ENCODE measurements at regions of chr20 and their contacts with region 1.

Region 1: GRCh38 chr20:32091888-32092346 is 17.6 kb upstream of the TM9SF4 start:
- DNase-seq: peak; percentile 82
- H3K4me3 ChIP-seq: peak overlapping the region in 1 of 2 experiments; percentile 50; a peak in 1 of 4 replicates
- H3K27ac ChIP-seq: no peak overlapping the region
- H3K4me1 ChIP-seq: no peaks in the 10 kb centered on the region; a peak in 1 of 4 replicates
- H3K27me3 ChIP-seq: peaks cover 10% of the 10 kb centered on the region; the same call in 1 of the 2 replicates
- CTCF ChIP-seq: peak; percentile 95
- EP300 ChIP-seq: no peak
- RAD21 ChIP-seq: peak; percentile 75

Region 2: GRCh38 chr20:31835977-31836852 is 255.7 kb before region 1 on chr20:
- CTCF ChIA-PET with region 1: interaction called, 13 read pairs
- POLR2A ChIA-PET with region 1: no interaction called
- DNase-seq: peak; percentile 57
- H3K4me3 ChIP-seq: no peak overlapping the region
- H3K27ac ChIP-seq: peak overlapping the region; percentile 62 to 88; a peak in 3 of 4 replicates
- H3K4me1 ChIP-seq: peaks cover 37 to 51% of the 10 kb centered on the region in 2 experiments
- H3K27me3 ChIP-seq: no peaks in the 10 kb centered on the region
- CTCF ChIP-seq: no peak
- EP300 ChIP-seq: peak in 1 of 2 experiments; percentile 94; a peak in 3 of 4 replicates
- RAD21 ChIP-seq: no peak

Region 3: GRCh38 chr20:32077190-32077589 is 14.7 kb before region 1 on chr20:
- CTCF ChIA-PET with region 1: interaction called, 23 read pairs
- POLR2A ChIA-PET with region 1: no interaction called
- DNase-seq: no peak
- H3K4me3 ChIP-seq: no peak overlapping the region
- H3K27ac ChIP-seq: no peak overlapping the region
- H3K4me1 ChIP-seq: no peaks in the 10 kb centered on the region; a peak in 1 of 4 replicates
- H3K27me3 ChIP-seq: no peaks in the 10 kb centered on the region; the same call in none of the 2 replicates
- CTCF ChIP-seq: no peak
- EP300 ChIP-seq: no peak
- RAD21 ChIP-seq: no peak

Region 4: GRCh38 chr20:32109392-32110172 is 17.7 kb after region 1 on chr20 and contains the start of gene TM9SF4:
- CTCF ChIA-PET with region 1: interaction called, 20 read pairs
- POLR2A ChIA-PET with region 1: interaction called, 3 read pairs
- DNase-seq: peak; percentile 86
- H3K4me3 ChIP-seq: peak within 1 kb of the TSS; percentile 82 to 84
- H3K27ac ChIP-seq: peak within 1 kb of the TSS; percentile 97 to 98
- H3K4me1 ChIP-seq: peaks cover 5 to 15% of the 10 kb centered on the region in 2 experiments; a peak in 3 of 4 replicates
- H3K27me3 ChIP-seq: no peaks in the 10 kb centered on the region
- CTCF ChIP-seq: no peak
- EP300 ChIP-seq: no peak
- RAD21 ChIP-seq: no peak
- polyA plus RNA-seq, gene TM9SF4: 61.0 and 67.8 TPM in 2 replicates